Spleen (tissue), 13 donors: ENCODE measurements at regions of chr3 and their contacts with region 1.

Region 1: DNA sequence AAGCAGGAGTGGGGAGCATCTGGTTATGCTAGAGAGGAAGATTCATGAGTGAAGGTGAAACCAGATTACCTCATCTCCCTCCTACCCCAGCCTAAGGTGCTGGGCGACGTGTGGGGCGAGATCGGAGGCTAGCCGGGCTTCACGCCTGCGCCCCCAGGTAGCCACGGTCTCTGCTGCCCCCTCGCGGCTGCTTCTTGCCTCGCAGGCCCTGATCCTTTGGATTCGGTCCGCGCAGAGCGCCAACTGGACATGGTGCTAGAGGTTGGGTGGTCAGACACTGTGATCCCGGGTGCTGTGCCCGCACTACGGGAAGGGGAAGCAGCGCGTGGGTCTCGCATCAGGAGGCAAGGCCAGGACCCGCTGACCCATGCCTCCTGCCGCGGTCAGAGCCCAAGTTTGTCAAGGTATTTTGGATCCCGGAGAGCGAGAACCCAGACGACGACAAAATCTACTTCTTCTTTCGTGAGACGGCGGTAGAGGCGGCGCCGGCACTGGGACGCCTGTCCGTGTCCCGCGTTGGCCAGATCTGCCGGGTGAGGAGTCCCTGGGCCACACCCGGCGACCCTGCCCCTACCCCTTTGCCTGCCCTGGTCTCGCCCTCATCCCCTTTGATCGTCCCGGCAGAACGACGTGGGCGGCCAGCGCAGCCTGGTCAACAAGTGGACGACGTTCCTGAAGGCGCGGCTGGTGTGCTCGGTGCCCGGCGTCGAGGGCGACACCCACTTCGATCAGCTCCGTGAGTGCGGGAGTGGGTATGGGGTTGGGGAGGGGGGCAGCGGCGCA is 4.2 kb downstream of the SEMA3B start:
- DNase-seq: peak; percentile 97
- H3K4me3 ChIP-seq: peak overlapping the region in 7 of 8 donors; percentile 10 to 56 (median 16)
- H3K27ac ChIP-seq: peak overlapping the region in 1 of 8 donors; percentile 46
- H3K4me1 ChIP-seq: peaks cover 14 to 78% (median 53%) of the 10 kb centered on the region in 6 donors
- H3K27me3 ChIP-seq: peaks cover 5 to 52% (median 41%) of the 10 kb centered on the region in 7 donors
- CTCF ChIP-seq: peak; percentile 99 to 100 (median 99)
- POLR2A ChIP-seq: no peak

Region 2: DNA sequence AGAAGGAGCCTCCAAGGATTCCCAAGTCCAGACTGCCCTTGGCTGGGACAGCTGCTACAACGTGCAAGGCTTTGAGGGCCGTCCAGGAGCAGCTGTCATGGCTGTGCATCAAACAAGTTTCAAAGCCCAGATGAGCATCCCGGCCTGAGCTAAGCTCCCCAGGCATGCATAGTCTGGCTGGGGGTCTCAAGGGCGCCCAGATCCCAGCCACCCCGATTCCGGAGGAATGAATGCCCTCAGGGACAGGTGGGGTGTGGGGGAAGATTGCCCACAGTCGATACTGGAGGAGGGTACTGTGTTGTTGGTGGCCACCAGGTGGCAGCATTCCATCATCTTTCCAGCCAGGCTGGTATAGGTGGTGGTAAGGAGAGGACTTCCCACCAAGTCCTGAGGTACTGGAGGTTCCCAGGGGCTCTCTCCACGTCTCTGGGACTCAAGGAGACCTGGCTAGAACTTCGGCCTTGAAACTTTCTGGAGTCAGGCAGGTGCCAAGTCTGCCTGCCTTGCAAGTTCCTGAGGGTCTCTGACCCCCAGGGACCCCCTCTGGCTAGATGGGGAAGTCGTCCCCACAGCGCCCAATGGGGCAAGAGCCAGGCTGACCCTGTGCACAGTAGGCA is 151.6 kb before region 1 on chr3:
- intact Hi-C with region 1: loop called (anchors 10 kb)
- DNase-seq: peak; percentile 89
- H3K4me3 ChIP-seq: no peak overlapping the region
- H3K27ac ChIP-seq: peak overlapping the region in 3 of 8 donors; percentile 15 to 48 (median 16)
- H3K4me1 ChIP-seq: peaks cover 3 to 54% (median 28%) of the 10 kb centered on the region in 6 donors
- H3K27me3 ChIP-seq: no peaks in the 10 kb centered on the region
- CTCF ChIP-seq: peak; percentile 71 to 91 (median 85)
- POLR2A ChIP-seq: no peak

Region 3: GRCh38 chr3:50154840-50155474 is 118.1 kb before region 1 on chr3 and contains the start of gene SEMA3F:
- intact Hi-C with region 1: no loop called
- DNase-seq: peak; percentile 91
- H3K4me3 ChIP-seq: peak within 1 kb of the TSS; percentile 43 to 83 (median 55)
- H3K27ac ChIP-seq: peak within 1 kb of the TSS; percentile 11 to 82 (median 74)
- H3K4me1 ChIP-seq: peaks cover 8 to 91% (median 52%) of the 10 kb centered on the region in 6 donors
- H3K27me3 ChIP-seq: peaks cover 0 to 47% (median 20%) of the 10 kb centered on the region in 7 donors
- CTCF ChIP-seq: peak in 1 of 11 experiments; percentile 13
- POLR2A ChIP-seq: no peak
- total RNA-seq, gene SEMA3F: 56.1 to 205 (median 98.8) TPM

Region 4: GRCh38 chr3:50192689-50193141 is 80.4 kb before region 1 on chr3:
- intact Hi-C with region 1: loop called (anchors 2 kb)
- DNase-seq: peak; percentile 90
- H3K4me3 ChIP-seq: peak overlapping the region in 1 of 8 donors; percentile 16
- H3K27ac ChIP-seq: no peak overlapping the region
- H3K4me1 ChIP-seq: peaks cover 10 to 44% (median 31%) of the 10 kb centered on the region in 6 donors
- H3K27me3 ChIP-seq: peaks cover 9 to 51% (median 29%) of the 10 kb centered on the region in 7 donors
- CTCF ChIP-seq: peak; percentile 70 to 95 (median 90)
- POLR2A ChIP-seq: no peak

Region 5: DNA sequence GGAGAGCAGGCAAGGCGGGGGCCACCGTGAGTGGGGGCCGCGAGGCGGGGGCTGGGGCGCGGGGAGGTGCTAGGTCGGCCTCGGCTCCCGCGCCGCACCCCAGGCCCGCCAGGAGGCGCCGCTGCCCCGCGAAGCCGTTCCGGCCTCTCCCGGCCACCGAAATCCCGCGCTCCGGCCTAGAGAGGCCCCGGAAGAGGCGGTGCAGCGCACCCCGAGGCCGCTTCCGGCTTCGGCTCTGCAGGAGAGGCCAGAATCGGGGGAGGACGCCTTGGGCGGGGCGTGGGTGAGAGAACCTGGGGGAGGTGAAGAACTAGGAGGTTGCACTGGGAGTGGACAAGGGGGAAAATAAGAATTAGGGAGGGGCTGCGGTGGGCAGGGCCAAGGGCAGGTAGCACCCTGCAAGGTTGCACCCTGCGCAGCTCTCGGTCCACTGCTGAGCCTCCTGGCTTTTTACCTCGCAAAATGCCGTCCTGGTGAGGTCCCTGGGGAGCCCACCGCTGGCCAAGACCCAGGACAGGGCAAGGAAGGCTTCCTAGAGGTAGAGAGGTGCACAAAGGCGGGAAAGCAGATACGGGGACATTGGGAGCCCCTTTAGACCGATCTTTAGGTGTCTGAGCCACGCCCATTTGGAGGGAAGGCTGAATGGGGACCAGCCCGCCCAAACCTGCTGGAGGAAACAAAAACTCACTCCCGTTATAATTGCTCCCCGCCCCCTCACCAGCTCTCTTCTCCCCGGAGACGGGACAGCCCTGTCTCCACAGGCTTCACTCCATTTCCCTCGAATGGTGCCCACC is 45.5 kb before region 1 on chr3:
- intact Hi-C with region 1: loop called (anchors 5 kb)
- DNase-seq: peak; percentile 99
- H3K4me3 ChIP-seq: peak overlapping the region; percentile 62 to 79 (median 72)
- H3K27ac ChIP-seq: peak overlapping the region; percentile 74 to 92 (median 84)
- H3K4me1 ChIP-seq: peaks cover 7 to 62% (median 48%) of the 10 kb centered on the region in 6 donors
- H3K27me3 ChIP-seq: no peaks in the 10 kb centered on the region
- CTCF ChIP-seq: peak; percentile 66 to 98 (median 94)
- POLR2A ChIP-seq: peak in 1 of 3 donors; percentile 14

Region 6: GRCh38 chr3:50392101-50392715 is 119.1 kb after region 1 on chr3:
- intact Hi-C with region 1: no loop called
- DNase-seq: no peak
- H3K4me3 ChIP-seq: no peak overlapping the region
- H3K27ac ChIP-seq: no peak overlapping the region
- H3K4me1 ChIP-seq: peaks cover 0 to 28% (median 9%) of the 10 kb centered on the region in 6 donors
- H3K27me3 ChIP-seq: no peaks in the 10 kb centered on the region
- CTCF ChIP-seq: no peak
- POLR2A ChIP-seq: no peak